Dorsolateral prefrontal cortex (tissue), 120 donors: ENCODE measurements at regions of chr20 and their contacts with region 1.

Region 1: GRCh38 chr20:49338061-49338460 is 60.2 kb upstream of the ZNFX1 start:
- DNase-seq: no peak
- H3K4me3 ChIP-seq: no peak overlapping the region
- H3K27ac ChIP-seq: no peak overlapping the region
- H3K27me3 ChIP-seq: no peaks in the 10 kb centered on the region
- CTCF ChIP-seq: no peak

Region 2: DNA sequence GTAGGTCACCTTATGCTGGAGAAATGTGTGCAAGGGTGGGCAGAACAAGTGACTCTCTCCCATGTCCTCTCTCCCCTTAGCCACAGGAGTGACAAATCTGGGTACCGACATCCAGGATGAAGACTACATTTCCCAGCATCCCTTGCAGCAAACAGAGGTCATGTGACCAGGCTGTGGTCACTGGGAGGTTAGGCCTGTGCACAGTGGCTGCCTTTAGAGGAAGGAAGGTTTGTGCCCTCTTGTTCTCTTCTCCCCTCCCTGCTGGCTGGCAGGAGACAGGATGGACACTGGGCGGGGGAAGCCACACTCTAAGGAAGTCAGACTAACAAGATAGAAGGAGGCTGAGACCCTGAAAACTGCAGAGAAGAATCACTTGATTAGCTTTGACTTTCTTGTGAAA is 870.4 kb before region 1 on chr20:
- intact Hi-C with region 1: no loop called
- DNase-seq: no peak
- H3K4me3 ChIP-seq: no peak overlapping the region
- H3K27ac ChIP-seq: no peak overlapping the region
- H3K27me3 ChIP-seq: peaks cover 0 to 32% (median 0%) of the 10 kb centered on the region in 45 donors
- CTCF ChIP-seq: no peak

Region 3: DNA sequence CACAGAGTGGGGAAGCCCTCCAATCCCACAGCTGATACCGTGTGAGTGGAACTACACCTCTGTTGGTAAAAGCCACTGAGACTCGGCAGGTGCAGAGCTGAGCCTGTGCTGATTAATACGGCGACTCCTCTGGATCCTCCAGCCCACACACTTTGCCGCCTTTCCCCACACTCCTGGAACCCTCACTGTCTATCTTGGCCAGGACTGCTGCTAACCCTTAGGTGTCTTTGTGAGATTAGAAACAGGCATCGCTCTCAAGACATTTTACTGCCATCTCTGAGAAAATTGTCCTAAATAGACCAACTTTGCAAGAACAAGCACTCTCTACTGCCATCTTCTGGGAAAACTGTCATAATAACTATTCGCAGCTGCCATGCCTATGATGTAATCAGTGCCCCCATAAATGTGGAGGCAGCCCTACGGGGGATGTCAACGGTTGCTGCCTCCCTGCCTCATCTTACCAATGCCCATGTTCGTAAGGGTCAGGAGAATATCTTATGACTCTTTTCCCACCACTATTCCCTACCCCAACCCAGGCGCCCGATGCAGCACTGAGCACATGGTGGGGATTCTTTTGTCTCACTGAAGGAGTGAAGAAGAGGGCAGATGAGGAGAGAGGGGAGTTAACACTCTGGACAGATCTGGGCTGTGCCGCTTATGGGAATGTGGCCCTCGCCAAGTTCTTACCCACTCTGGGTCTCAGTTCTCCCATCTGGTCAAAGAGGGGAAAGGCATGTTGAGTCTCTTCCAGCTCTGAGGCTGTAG is 170.6 kb after region 1 on chr20:
- intact Hi-C with region 1: loop called in 1 of 2 experiments (anchors 2 kb)
- DNase-seq: peak in 6 of 10 donors; percentile 21 to 44 (median 35)
- H3K4me3 ChIP-seq: peak overlapping the region in 37 of 59 donors; percentile 0 to 52 (median 28)
- H3K27ac ChIP-seq: peak overlapping the region in 29 of 59 donors; percentile 2 to 75 (median 47)
- H3K27me3 ChIP-seq: peaks cover 0 to 7% (median 0%) of the 10 kb centered on the region in 45 donors
- CTCF ChIP-seq: peak; percentile 31 to 83 (median 69)

Region 4: DNA sequence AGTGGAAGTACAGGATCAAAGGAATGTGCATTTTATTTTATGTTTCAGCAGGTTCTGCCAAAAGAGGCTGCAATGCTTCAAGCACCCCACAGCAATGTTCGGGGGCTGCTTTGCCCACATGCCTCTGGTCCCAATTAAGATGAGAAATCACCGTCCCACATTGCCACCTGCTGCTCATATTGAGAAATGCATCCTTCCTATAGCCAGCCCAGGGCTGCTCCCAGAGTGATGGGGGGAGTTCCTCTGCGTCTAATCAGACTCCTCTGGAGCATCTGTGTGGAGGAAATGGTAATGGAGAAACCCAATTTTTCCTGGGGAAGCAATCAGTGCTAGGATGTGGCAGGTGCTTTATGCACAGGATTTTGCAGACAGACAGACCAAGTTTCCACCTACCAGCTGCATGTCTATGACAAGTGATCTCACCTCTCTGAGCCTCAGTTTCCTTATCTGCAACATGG is 196.2 kb after region 1 on chr20:
- intact Hi-C with region 1: loop called (anchors 2 kb)
- DNase-seq: peak in 7 of 10 donors; percentile 43 to 73 (median 59)
- H3K4me3 ChIP-seq: no peak overlapping the region
- H3K27ac ChIP-seq: peak overlapping the region in 1 of 59 donors; percentile 1
- H3K27me3 ChIP-seq: no peaks in the 10 kb centered on the region
- CTCF ChIP-seq: peak; percentile 58 to 93 (median 84)